ENCODE measurements at regions of chr2 and their contacts with region 1.

Region 1: GRCh38 chr2:84881581-84882414 is 914 bp upstream of the TRABD2A start:
- DNase-seq: peak; percentile 78 to 92 (median 86)
- ATAC-seq: peak; percentile 70
- H3K4me3 ChIP-seq: peak overlapping the region; percentile 80 to 90
- H3K4me3 Mint-ChIP-seq: peak overlapping the region; percentile 93
- H3K27ac ChIP-seq: peak overlapping the region; percentile 72 to 79
- H3K27ac Mint-ChIP-seq: peak overlapping the region; percentile 93
- H3K4me1 ChIP-seq: peaks cover 27% of the 10 kb centered on the region
- H3K4me1 Mint-ChIP-seq: peaks cover 68% of the 10 kb centered on the region
- H3K27me3 ChIP-seq: no peaks in the 10 kb centered on the region
- H3K27me3 Mint-ChIP-seq: no peaks in the 10 kb centered on the region
- CTCF ChIP-seq: peak; percentile 64

Region 2: GRCh38 chr2:84459018-84459943 is 422.5 kb before region 1 on chr2 and contains the start of gene SUCLG1:
- CTCF ChIA-PET with region 1: no interaction called
- POLR2A ChIA-PET with region 1: no interaction called
- intact Hi-C with region 1: loop called in 1 of 2 experiments (anchors 1 kb)
- DNase-seq: peak; percentile 72 to 94 (median 87)
- ATAC-seq: peak; percentile 96
- H3K4me3 ChIP-seq: peak within 1 kb of the TSS; percentile 81 to 95
- H3K4me3 Mint-ChIP-seq: peak within 1 kb of the TSS; percentile 98
- H3K27ac ChIP-seq: peak within 1 kb of the TSS; percentile 78 to 97
- H3K27ac Mint-ChIP-seq: peak within 1 kb of the TSS; percentile 98
- H3K4me1 ChIP-seq: peaks cover 30% of the 10 kb centered on the region
- H3K4me1 Mint-ChIP-seq: peaks cover 46% of the 10 kb centered on the region
- H3K27me3 ChIP-seq: no peaks in the 10 kb centered on the region
- H3K27me3 Mint-ChIP-seq: no peaks in the 10 kb centered on the region
- CTCF ChIP-seq: no peak
- total RNA-seq, gene SUCLG1: 31.6 to 35.1 TPM

Region 3: GRCh38 chr2:84516234-84516986 is 365.4 kb before region 1 on chr2 and contains the start of gene DNAH6:
- CTCF ChIA-PET with region 1: no interaction called
- POLR2A ChIA-PET with region 1: no interaction called
- intact Hi-C with region 1: loop called in 1 of 2 experiments (anchors 5 kb)
- DNase-seq: peak; percentile 71 to 95 (median 85)
- ATAC-seq: peak; percentile 98
- H3K4me3 ChIP-seq: peak within 1 kb of the TSS; percentile 45 to 49
- H3K4me3 Mint-ChIP-seq: peak within 1 kb of the TSS; percentile 89
- H3K27ac ChIP-seq: peak within 1 kb of the TSS; percentile 56 to 74
- H3K27ac Mint-ChIP-seq: peak within 1 kb of the TSS; percentile 85
- H3K4me1 ChIP-seq: peaks cover 9% of the 10 kb centered on the region
- H3K4me1 Mint-ChIP-seq: peaks cover 18% of the 10 kb centered on the region
- H3K27me3 ChIP-seq: no peaks in the 10 kb centered on the region
- H3K27me3 Mint-ChIP-seq: no peaks in the 10 kb centered on the region
- CTCF ChIP-seq: no peak
- total RNA-seq, gene DNAH6: 0.30 to 0.61 TPM

Region 4: DNA sequence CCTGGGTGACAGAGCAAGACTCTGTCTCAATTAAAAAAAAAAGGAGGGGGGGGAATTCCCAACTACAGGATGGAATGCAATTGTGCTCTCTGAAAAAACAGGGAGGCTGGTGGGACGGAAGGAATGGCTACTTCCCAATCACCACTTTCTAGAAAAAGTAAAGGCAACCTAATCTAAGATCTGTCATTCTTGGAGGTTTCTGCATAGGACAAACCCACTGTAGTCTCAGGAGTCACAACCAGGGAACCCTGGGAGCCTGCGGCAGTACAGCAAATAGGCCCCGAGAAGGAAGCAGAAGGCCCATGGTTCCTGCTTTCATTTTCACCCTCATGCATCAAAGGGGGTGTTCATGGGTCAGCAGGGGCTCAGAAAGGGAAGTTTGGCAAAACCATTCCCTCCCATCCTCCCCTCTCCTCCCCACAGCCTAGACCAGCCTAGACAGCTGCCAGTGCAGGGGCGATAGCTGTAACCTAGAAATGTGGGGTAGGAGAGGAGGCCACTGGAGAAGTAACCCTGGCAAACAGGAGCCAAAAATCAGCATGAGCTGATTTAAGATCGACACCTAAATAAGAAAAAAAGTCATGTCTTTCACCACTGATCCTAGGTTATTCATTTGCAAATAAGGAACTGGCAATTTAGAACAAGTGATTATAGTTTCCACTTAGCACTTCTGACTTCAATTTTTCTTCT is 48.9 kb before region 1 on chr2:
- CTCF ChIA-PET with region 1: interaction called, 5 read pairs
- POLR2A ChIA-PET with region 1: no interaction called
- intact Hi-C with region 1: loop called in 1 of 2 experiments (anchors 10 kb)
- DNase-seq: peak in 1 of 9 experiments; percentile 56
- ATAC-seq: peak; percentile 51
- H3K4me3 ChIP-seq: peak overlapping the region in 1 of 2 experiments; percentile 6
- H3K4me3 Mint-ChIP-seq: peak overlapping the region; percentile 79
- H3K27ac ChIP-seq: peak overlapping the region; percentile 7 to 58
- H3K27ac Mint-ChIP-seq: no peak overlapping the region
- H3K4me1 ChIP-seq: peaks cover 90% of the 10 kb centered on the region
- H3K4me1 Mint-ChIP-seq: peaks cover 45% of the 10 kb centered on the region
- H3K27me3 ChIP-seq: peaks cover 0 to 3% of the 10 kb centered on the region in 2 experiments
- H3K27me3 Mint-ChIP-seq: no peaks in the 10 kb centered on the region
- CTCF ChIP-seq: no peak

Region 5: DNA sequence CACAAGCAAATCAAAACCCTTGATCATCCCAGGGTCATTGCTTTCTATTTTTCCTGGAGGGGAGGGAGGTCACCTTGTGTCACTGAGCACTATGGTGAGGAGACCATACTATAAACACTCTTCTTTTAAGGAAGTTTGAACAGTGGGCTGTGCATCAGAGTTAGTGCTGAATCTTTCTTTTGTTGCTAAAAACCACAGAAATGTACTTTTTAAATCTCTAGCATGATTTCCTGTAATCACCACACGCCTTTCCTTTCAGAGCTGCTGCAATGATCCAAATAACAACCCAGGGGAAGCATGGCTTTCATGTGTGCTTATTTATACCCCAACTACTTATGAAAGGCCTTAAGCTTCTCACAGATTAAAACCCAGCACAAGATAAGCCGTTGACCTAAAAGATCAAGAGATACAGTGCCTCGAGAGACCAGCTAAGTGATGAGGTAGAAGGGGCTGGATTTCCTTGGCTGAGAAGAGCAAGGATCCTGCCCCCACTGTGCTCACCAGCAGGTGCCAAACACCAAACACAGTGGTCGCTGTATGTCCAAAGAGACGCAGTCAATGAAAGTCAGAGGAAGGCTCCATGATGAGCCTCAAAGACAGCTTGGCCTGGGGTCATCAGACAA is 35.6 kb before region 1 on chr2:
- CTCF ChIA-PET with region 1: interaction called, 16 read pairs
- POLR2A ChIA-PET with region 1: interaction called, 6 read pairs
- intact Hi-C with region 1: no loop called
- DNase-seq: peak in 7 of 9 experiments; percentile 37 to 87 (median 65)
- ATAC-seq: peak; percentile 70
- H3K4me3 ChIP-seq: peak overlapping the region in 1 of 2 experiments; percentile 7
- H3K4me3 Mint-ChIP-seq: peak overlapping the region; percentile 65
- H3K27ac ChIP-seq: peak overlapping the region; percentile 68 to 88
- H3K27ac Mint-ChIP-seq: peak overlapping the region; percentile 94
- H3K4me1 ChIP-seq: peaks cover 97% of the 10 kb centered on the region
- H3K4me1 Mint-ChIP-seq: peaks cover 94% of the 10 kb centered on the region
- H3K27me3 ChIP-seq: no peaks in the 10 kb centered on the region
- H3K27me3 Mint-ChIP-seq: no peaks in the 10 kb centered on the region
- CTCF ChIP-seq: no peak

Region 6: DNA sequence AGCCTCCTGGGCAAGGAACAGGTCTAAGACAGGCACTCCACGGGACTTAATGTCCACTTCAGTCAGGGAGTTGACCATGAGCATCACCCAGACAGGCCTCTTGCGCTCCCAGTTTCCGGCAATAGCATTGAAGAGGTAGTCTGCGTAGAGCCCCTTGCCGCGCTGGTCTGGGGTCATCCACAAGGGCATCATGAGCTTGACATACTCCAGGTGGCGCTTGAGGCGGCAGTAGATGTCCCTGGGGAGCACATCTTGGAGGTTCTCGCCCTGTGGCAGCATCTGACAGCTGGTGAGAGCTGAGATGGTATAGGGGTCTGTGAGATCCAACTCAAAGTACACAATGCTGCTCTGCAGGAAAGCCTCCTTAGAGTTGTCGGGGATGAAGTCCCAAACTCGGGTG is 11.5 kb before region 1 on chr2:
- CTCF ChIA-PET with region 1: interaction called, 44 read pairs
- POLR2A ChIA-PET with region 1: interaction called, 8 read pairs
- intact Hi-C with region 1: loop called in 1 of 2 experiments (anchors 1 kb)
- DNase-seq: peak in 2 of 9 experiments; percentile 39 to 48
- ATAC-seq: no peak
- H3K4me3 ChIP-seq: no peak overlapping the region
- H3K4me3 Mint-ChIP-seq: peak overlapping the region; percentile 32
- H3K27ac ChIP-seq: no peak overlapping the region
- H3K27ac Mint-ChIP-seq: peak overlapping the region; percentile 82
- H3K4me1 ChIP-seq: peaks cover 82% of the 10 kb centered on the region
- H3K4me1 Mint-ChIP-seq: peaks cover 82% of the 10 kb centered on the region
- H3K27me3 ChIP-seq: no peaks in the 10 kb centered on the region
- H3K27me3 Mint-ChIP-seq: no peaks in the 10 kb centered on the region
- CTCF ChIP-seq: no peak

Region 7: DNA sequence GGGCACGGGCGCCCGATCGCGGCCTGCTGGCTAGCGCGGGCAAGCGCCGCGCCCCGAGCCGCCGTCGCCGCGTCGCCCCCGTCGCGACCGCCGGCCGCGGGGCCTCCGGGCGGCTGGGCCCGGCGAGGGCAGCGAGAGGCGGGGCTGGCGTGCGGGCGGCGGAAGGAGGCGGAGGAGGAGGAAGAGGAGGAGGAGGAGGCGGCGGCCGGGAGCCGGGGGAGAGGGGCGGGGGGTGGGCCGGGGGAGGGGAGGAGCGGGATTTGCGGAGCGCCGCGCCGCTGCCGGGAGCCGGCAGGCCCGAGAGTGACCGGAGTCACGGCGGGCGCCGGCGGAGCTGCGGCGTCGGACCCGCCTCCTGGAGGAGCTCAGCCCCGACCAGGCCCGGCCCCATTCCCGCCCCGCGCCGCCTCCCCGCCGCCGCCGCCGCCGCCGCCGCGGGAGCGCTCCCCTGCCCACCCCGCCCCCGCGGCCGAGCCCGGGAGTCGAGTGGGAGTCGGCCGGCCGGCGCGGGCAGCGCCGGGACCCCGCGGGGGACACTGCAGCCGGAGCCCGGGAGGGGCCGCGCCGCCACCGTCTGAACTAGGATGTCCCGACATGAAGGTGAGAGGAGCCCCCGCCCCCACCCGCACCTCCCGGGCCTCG is 89.2 kb after region 1 on chr2 and contains the start of gene KCMF1:
- CTCF ChIA-PET with region 1: interaction called, 3 read pairs
- POLR2A ChIA-PET with region 1: interaction called, 3 read pairs
- intact Hi-C with region 1: loop called in 1 of 2 experiments (anchors 5 kb)
- DNase-seq: peak; percentile 26 to 80 (median 69)
- ATAC-seq: peak; percentile 52
- H3K4me3 ChIP-seq: peak within 1 kb of the TSS; percentile 66 to 75
- H3K4me3 Mint-ChIP-seq: peak within 1 kb of the TSS; percentile 92
- H3K27ac ChIP-seq: peak within 1 kb of the TSS; percentile 74 to 78
- H3K27ac Mint-ChIP-seq: peak within 1 kb of the TSS; percentile 97
- H3K4me1 ChIP-seq: peaks cover 51% of the 10 kb centered on the region
- H3K4me1 Mint-ChIP-seq: peaks cover 61% of the 10 kb centered on the region
- H3K27me3 ChIP-seq: no peaks in the 10 kb centered on the region
- H3K27me3 Mint-ChIP-seq: no peaks in the 10 kb centered on the region
- CTCF ChIP-seq: no peak
- total RNA-seq, gene KCMF1: 85.3 to 89.5 TPM

Region 8: GRCh38 chr2:85066874-85067351 is 185.1 kb after region 1 on chr2:
- CTCF ChIA-PET with region 1: no interaction called
- POLR2A ChIA-PET with region 1: no interaction called
- intact Hi-C with region 1: no loop called
- DNase-seq: peak in 5 of 9 experiments; percentile 22 to 50 (median 31)
- ATAC-seq: no peak
- H3K4me3 ChIP-seq: no peak overlapping the region
- H3K4me3 Mint-ChIP-seq: no peak overlapping the region
- H3K27ac ChIP-seq: no peak overlapping the region
- H3K27ac Mint-ChIP-seq: no peak overlapping the region
- H3K4me1 ChIP-seq: peaks cover 7% of the 10 kb centered on the region
- H3K4me1 Mint-ChIP-seq: peaks cover 3% of the 10 kb centered on the region
- H3K27me3 ChIP-seq: no peaks in the 10 kb centered on the region
- H3K27me3 Mint-ChIP-seq: peaks cover 19% of the 10 kb centered on the region
- CTCF ChIP-seq: peak; percentile 39

Measured in CD8-positive, alpha-beta T cell (primary cell).